Naive thymus-derived CD4-positive, alpha-beta T cell (primary cell): ENCODE measurements at regions of chr18 and their contacts with region 1.

Region 1: DNA sequence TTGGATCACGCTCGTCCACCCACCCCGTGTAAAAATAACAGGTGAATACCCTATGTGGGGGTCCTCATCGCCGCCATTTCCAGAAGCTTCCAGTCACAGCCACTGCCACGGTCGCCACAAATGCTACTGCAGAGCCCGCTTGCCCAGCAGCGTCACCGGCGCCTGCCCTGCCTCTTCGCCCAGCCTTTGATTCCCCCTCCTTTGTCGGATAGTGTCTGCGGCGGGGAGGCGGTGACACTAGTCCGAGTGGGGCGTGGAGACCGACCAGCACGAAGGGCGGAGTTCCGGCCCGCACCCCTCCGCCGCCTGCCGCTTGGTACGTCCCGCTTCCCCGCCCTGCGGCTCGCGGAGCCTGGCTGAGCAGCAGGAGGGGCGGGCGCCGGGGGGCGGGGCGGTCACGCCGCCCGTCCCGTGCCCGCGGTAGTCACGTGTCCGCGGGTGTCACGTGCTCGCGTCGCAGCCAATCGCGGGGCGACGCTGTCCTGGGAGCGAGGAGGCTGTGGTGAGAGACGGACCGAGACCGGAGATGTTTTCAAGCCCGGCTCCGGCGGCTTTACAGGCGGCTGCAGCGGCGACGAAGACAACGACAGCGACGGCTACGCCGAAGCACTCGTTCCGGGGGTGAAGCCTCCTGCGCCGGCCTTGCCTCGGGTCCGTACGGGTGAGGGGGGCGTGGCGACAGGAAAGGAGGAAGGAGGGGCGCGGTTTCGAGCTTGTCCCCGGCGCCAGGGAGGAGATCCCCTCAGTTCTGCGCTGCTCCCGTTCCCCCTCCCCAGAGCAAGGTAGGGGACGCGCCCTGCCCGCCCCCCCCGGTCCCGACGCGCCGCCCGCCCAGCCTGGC is at the start of gene ANKRD12:
- DNase-seq: peak; percentile 93 to 98 (median 96)
- ATAC-seq: peak; percentile 89
- H3K4me3 ChIP-seq: peak within 1 kb of the TSS; percentile 86
- H3K4me3 Mint-ChIP-seq: peak within 1 kb of the TSS; percentile 95 to 99 (median 98)
- H3K27ac ChIP-seq: peak within 1 kb of the TSS; percentile 88
- H3K27ac Mint-ChIP-seq: peak within 1 kb of the TSS; percentile 95 to 99 (median 98)
- H3K4me1 ChIP-seq: peaks cover 42 to 50% of the 10 kb centered on the region in 2 donors
- H3K4me1 Mint-ChIP-seq: peaks cover 45 to 75% (median 69%) of the 10 kb centered on the region in 7 donors
- H3K27me3 ChIP-seq: no peaks in the 10 kb centered on the region
- H3K27me3 Mint-ChIP-seq: no peaks in the 10 kb centered on the region
- total RNA-seq, gene ANKRD12: 98.9 to 274 (median 204) TPM

Region 2: GRCh38 chr18:8704361-8705279 is 431.9 kb before region 1 on chr18:
- CTCF ChIA-PET with region 1: no interaction called
- POLR2A ChIA-PET with region 1: no interaction called
- intact Hi-C with region 1: loop called (anchors 2 kb)
- DNase-seq: peak; percentile 65 to 92 (median 75)
- ATAC-seq: peak; percentile 96
- H3K4me3 ChIP-seq: peak overlapping the region; percentile 75
- H3K4me3 Mint-ChIP-seq: peak overlapping the region; percentile 83 to 96 (median 90)
- H3K27ac ChIP-seq: peak overlapping the region; percentile 25
- H3K27ac Mint-ChIP-seq: peak overlapping the region in 4 of 9 donors; percentile 4 to 67 (median 48)
- H3K4me1 ChIP-seq: peaks cover 6 to 21% of the 10 kb centered on the region in 2 donors
- H3K4me1 Mint-ChIP-seq: peaks cover 13 to 29% (median 17%) of the 10 kb centered on the region in 7 donors
- H3K27me3 ChIP-seq: peaks cover 5 to 19% of the 10 kb centered on the region in 2 donors
- H3K27me3 Mint-ChIP-seq: peaks cover 60 to 78% (median 68%) of the 10 kb centered on the region in 5 donors

Region 3: GRCh38 chr18:9095297-9096006 is 41.1 kb before region 1 on chr18:
- CTCF ChIA-PET with region 1: interaction called, 8 read pairs
- POLR2A ChIA-PET with region 1: interaction called, 228 read pairs
- intact Hi-C with region 1: loop called in 1 of 2 experiments (anchors 1 kb)
- DNase-seq: peak in 8 of 9 donors; percentile 46 to 71 (median 58)
- ATAC-seq: peak; percentile 57
- H3K4me3 ChIP-seq: peak overlapping the region; percentile 26
- H3K4me3 Mint-ChIP-seq: peak overlapping the region; percentile 48 to 80 (median 70)
- H3K27ac ChIP-seq: peak overlapping the region; percentile 64
- H3K27ac Mint-ChIP-seq: peak overlapping the region; percentile 88 to 99 (median 92)
- H3K4me1 ChIP-seq: peaks cover 25 to 49% of the 10 kb centered on the region in 2 donors
- H3K4me1 Mint-ChIP-seq: peaks cover 34 to 68% (median 61%) of the 10 kb centered on the region in 7 donors
- H3K27me3 ChIP-seq: no peaks in the 10 kb centered on the region
- H3K27me3 Mint-ChIP-seq: no peaks in the 10 kb centered on the region

Region 4: GRCh38 chr18:9147440-9148202 is 11.1 kb after region 1 on chr18:
- CTCF ChIA-PET with region 1: interaction called, 5 read pairs
- POLR2A ChIA-PET with region 1: interaction called, 27 read pairs
- intact Hi-C with region 1: loop called (anchors 1 kb)
- DNase-seq: peak in 7 of 9 donors; percentile 35 to 66 (median 49)
- ATAC-seq: peak; percentile 81
- H3K4me3 ChIP-seq: no peak overlapping the region
- H3K4me3 Mint-ChIP-seq: peak overlapping the region in 9 of 10 donors; percentile 3 to 79 (median 42)
- H3K27ac ChIP-seq: peak overlapping the region; percentile 30
- H3K27ac Mint-ChIP-seq: peak overlapping the region; percentile 21 to 90 (median 66)
- H3K4me1 ChIP-seq: peaks cover 18 to 59% of the 10 kb centered on the region in 2 donors
- H3K4me1 Mint-ChIP-seq: peaks cover 54 to 93% (median 84%) of the 10 kb centered on the region in 7 donors
- H3K27me3 ChIP-seq: no peaks in the 10 kb centered on the region
- H3K27me3 Mint-ChIP-seq: no peaks in the 10 kb centered on the region

Region 5: GRCh38 chr18:9474983-9475642 is 338.6 kb after region 1 on chr18 and contains the start of gene RALBP1:
- CTCF ChIA-PET with region 1: no interaction called
- POLR2A ChIA-PET with region 1: no interaction called
- intact Hi-C with region 1: loop called (anchors 1 kb)
- DNase-seq: peak; percentile 92 to 98 (median 96)
- ATAC-seq: peak; percentile 99
- H3K4me3 ChIP-seq: peak within 1 kb of the TSS; percentile 88
- H3K4me3 Mint-ChIP-seq: peak within 1 kb of the TSS; percentile 84 to 99 (median 97)
- H3K27ac ChIP-seq: peak within 1 kb of the TSS; percentile 81
- H3K27ac Mint-ChIP-seq: peak within 1 kb of the TSS; percentile 82 to 97 (median 94)
- H3K4me1 ChIP-seq: peaks cover 0 to 14% of the 10 kb centered on the region in 2 donors
- H3K4me1 Mint-ChIP-seq: peaks cover 21 to 41% (median 30%) of the 10 kb centered on the region in 7 donors
- H3K27me3 ChIP-seq: no peaks in the 10 kb centered on the region
- H3K27me3 Mint-ChIP-seq: peaks cover 0 to 24% (median 5%) of the 10 kb centered on the region in 5 donors
- total RNA-seq, gene RALBP1: 20.3 to 47.8 (median 42.2) TPM